ENCODE measurements at regions of chr12 and their contacts with region 1.

Region 1: DNA sequence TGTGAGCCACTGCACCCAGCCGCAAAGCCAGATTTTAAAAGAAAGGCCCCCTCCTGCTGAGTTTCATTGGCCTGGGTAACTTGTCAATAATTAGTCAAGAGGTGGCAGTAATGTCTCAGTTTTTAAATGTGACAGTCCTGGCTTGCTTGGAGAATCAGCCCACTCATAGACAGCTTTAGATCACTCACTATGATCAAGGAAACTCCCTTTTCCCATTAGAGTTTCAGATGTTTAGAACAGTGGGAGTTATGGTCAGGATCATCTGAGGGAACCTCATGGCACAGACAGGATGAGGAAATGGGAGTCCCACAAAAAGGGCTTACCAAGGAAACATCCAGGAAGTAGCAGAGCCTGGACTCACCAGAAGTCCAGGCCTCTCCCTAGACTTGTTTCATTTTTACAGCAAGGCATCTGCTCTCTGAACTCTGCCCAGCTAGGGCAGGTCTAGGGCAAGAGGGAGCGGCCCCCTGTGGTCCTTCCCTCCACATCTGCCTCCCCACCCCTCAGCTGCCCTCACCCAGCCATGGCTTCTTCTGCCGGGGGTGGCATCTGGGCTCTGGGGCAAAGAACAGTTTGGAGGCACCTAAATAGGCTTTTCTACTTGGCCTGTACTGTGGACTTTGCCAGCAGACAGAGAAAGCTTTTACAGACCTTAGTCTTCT is 11.2 kb downstream of the BCL2L14 start:
- DNase-seq: peak; percentile 82
- CTCF ChIP-seq: no peak

Region 2: DNA sequence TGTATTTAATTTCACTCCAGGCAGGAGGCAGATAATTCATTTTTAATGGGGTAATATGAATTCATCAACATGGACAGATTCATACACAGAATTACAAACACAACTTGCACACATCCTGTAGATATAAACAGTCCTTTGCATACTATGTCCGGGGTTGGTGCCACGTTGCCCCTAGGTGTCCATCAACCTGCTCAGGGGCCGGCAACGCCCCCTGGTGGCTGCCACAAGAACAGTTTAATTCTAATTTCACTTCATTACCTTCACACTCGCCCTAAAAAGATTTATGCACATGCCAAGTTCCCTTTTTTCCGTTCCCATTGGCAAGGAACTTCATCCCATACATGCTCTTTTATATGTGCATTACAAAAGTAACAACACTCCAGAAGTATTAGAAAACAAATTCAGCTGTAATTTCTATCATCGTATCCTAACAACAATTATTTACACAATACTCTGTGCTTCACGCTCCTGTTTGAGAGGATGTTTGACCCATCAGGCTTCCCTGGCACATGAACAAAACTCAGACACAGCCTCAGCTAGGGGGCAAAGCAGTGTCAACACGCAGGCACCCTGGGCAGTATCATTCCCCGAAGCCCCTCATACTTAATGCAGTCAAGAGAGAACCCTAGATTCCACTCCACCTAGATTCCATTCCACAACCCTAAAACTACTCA is 252.5 kb after region 1 on chr12:
- in situ Hi-C with region 1: loop called (anchors 10 kb)
- DNase-seq: peak; percentile 85
- CTCF ChIP-seq: peak; percentile 83

Region 3: DNA sequence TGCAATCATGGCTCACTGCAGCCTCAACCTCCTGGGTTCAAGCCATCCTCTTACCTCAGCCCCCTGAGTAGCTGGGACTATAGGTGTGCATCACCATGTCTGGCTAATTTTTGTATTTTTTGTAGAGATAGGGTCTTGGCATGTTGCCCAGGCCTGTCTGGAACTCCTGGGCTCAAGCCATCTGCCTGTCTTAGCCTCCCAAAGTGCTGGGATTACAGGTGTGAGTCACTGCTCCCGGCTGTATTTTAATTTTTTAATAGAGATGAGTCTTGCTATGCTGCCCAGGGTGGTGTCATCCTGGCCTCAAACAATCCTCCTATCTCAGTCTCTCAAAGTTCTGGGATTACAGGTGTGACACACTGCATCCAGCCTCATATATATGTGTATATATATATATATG is 777.7 kb after region 1 on chr12:
- in situ Hi-C with region 1: no loop called
- DNase-seq: no peak
- CTCF ChIP-seq: no peak

Measured in GM13976 (cell line).